Activated T-helper 1 cell treated with anti-CD3 and anti-CD28 coated beads, Interleukin-12 subunit alpha, Interleukin-12 subunit beta, Interleukin-2, Interleukin-4 antibody, amounts not matched to agents 30 ng/mL and 10 ng/mL and 1 ng/mL, durations not matched to agents 14 hours and 24 hours and 36 hours (primary cell): ENCODE measurements at regions of chr3 and their contacts with region 1.

Region 1: GRCh38 chr3:19543212-19543841 is 390.7 kb downstream of the EFHB start:
- DNase-seq: no peak
- H3K4me3 Mint-ChIP-seq: no peak overlapping the region
- H3K27ac Mint-ChIP-seq: no peak overlapping the region
- H3K4me1 Mint-ChIP-seq: no peaks in the 10 kb centered on the region
- H3K27me3 Mint-ChIP-seq: peaks cover 4% of the 10 kb centered on the region

Region 2: DNA sequence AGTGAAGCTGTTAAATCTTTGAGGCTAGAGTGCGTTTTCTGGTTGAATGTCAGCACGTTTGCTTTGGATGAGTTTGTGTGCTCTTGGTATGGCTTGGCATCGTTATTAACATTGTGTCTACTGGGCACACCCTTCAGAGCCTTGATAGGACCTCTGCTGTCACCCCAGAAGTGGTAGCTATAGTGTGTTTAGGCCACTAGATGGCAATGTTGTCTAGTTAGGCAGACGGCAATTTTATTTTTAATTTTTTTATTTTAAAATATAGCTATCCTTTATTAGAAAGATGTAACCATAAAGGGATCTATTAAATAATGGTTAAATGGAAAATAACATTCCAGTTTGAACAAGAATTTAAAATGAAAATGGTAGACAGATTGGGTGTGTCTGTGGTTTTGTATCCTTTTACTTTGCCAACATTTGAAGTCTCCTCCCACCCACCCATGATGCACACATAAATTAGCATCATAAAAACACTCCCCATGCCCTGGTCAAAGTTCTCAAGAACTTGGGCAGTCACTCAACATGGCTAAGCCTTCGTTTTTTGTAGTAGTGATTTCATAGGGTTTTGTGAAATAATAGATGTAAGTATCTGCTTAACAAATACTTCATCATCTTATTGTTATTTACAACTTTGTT is 194.3 kb before region 1 on chr3:
- intact Hi-C with region 1: loop called (anchors 1 kb)
- DNase-seq: no peak
- H3K4me3 Mint-ChIP-seq: no peak overlapping the region
- H3K27ac Mint-ChIP-seq: no peak overlapping the region
- H3K4me1 Mint-ChIP-seq: no peaks in the 10 kb centered on the region
- H3K27me3 Mint-ChIP-seq: peaks cover 5% of the 10 kb centered on the region

Region 3: DNA sequence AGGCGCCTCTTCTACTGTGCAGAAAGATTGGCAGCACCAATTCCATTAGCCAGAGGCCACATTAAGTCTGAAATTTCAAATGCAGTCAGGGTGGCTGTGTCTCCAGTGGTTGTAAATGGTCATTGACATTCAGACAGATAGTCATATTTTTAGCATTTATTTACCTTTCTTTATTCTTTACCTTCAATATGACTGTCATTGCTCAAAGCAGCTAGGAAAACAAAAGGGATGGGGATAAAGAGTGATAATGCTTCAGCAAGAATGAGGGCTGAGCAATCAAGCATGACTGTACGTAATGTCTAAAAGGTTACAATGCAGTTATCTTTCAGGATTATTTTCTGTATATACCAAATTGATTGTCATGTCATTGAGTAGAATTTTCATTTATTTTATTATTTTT is 30.3 kb after region 1 on chr3:
- intact Hi-C with region 1: no loop called
- DNase-seq: no peak
- H3K4me3 Mint-ChIP-seq: no peak overlapping the region
- H3K27ac Mint-ChIP-seq: no peak overlapping the region
- H3K4me1 Mint-ChIP-seq: no peaks in the 10 kb centered on the region
- H3K27me3 Mint-ChIP-seq: peaks cover 1% of the 10 kb centered on the region

Region 4: DNA sequence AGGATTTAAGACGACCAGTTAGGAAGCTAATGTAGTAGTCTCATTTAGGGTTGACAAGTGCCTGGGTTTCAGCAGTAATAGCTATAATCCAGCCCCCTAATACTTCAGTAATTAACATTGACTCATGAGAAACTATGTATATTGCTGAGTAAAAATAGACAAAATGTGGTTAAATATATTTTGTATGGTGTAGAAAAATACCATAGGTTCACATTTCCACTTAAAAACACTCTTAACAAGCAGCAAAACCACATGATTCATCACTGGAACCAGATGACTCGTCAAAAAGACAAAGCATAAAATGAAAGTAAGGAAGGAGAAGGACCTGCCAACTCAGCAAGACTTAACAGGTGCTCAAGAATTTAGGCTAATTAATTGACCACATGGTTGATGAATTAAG is 101.8 kb after region 1 on chr3:
- intact Hi-C with region 1: no loop called
- DNase-seq: no peak
- H3K4me3 Mint-ChIP-seq: no peak overlapping the region
- H3K27ac Mint-ChIP-seq: no peak overlapping the region
- H3K4me1 Mint-ChIP-seq: no peaks in the 10 kb centered on the region
- H3K27me3 Mint-ChIP-seq: no peaks in the 10 kb centered on the region